Colonic mucosa (tissue), 4 donors: ENCODE measurements at regions of chr17 and their contacts with region 1.

Region 1: GRCh38 chr17:46995841-46996571 is 17.0 kb upstream of the RPRML start:
- DNase-seq: no peak
- H3K4me3 ChIP-seq: no peak overlapping the region
- H3K27ac ChIP-seq: no peak overlapping the region
- H3K4me1 ChIP-seq: no peaks in the 10 kb centered on the region
- H3K27me3 ChIP-seq: no peaks in the 10 kb centered on the region
- CTCF ChIP-seq: no peak

Region 2: DNA sequence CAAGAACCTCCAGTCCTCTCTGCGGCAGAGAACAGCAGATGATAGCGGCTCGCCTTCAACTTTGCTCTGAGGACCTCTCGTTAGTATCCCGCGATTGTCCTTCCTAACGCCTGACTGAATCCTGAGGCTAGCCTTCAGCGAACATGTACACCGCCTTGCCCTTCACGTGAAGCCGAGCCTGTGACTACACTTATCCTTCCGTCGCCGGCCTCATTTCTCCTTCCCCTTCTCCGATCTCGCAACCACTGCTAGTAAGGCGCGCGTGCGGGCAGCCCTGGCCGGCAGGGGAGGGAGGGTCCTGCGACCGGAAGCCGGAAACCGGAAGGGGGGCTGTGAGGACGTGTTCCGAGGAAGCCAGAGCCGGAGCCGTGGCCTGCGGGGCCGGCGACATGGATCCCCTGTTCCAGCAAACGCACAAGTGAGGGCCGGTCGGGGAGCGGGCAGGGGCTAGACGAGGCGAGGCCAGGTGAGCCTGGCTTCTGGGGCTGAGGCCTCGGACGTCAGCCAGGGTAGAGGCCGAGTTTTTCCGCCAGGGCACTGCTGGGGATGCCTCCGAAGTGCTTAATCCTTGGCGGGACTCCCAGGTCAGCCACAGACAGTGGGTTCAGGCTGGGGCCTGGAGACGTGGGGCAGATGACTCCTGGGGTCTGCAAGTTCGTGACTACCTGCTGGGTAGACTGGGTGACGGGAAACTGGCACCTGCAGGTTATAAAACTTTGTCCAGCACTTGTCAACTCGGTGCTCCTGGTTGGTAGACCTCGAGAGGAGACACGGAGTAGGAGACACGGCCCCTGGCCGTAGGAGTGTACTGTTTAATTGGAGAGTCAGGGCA is 73.0 kb before region 1 on chr17 and contains the start of gene GOSR2:
- intact Hi-C with region 1: no loop called
- DNase-seq: peak; percentile 90
- H3K4me3 ChIP-seq: peak within 1 kb of the TSS; percentile 98
- H3K27ac ChIP-seq: peak within 1 kb of the TSS; percentile 90
- H3K4me1 ChIP-seq: peaks cover 8% of the 10 kb centered on the region
- H3K27me3 ChIP-seq: no peaks in the 10 kb centered on the region
- CTCF ChIP-seq: no peak
- total RNA-seq, gene GOSR2: 36.5 to 39.4 TPM

Region 3: DNA sequence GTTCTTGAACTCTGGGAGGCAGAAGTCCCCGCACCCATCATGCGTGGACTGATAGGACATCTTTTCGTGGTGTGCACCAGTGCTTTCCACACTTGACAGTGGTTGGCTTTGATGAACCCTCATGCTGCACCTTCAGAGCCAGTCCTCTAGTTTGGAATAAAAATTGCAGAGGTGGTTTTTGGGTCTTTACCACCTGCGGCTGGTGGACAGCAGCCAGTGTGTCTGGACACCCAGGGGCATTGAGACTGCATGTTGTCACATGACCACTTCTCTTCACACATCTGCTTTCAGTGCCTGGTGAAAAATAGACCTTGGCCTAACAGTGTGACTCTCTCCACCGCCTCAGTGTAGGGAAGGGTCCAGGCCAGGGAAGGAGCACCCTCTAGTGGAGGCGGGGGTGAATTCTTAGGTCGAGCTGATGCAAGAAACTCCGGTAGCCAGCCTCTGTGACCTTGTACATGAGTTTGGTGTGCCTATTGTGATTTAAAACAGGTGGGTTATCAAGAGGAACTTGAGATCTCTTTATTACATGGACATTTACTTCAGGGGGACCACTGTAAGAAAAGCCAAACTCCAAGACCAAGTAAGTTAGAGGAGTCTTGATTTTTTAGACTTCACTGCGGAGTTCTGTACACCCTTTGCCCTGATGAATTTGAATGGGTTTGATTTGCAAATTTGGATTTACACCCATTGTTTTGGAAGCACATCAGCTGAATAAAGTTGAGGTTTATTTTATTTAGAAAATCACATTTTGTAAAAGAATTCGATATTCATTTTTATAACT is 55.2 kb before region 1 on chr17:
- intact Hi-C with region 1: loop called (anchors 2 kb)
- DNase-seq: peak; percentile 74
- H3K4me3 ChIP-seq: no peak overlapping the region
- H3K27ac ChIP-seq: no peak overlapping the region
- H3K4me1 ChIP-seq: no peaks in the 10 kb centered on the region
- H3K27me3 ChIP-seq: no peaks in the 10 kb centered on the region
- CTCF ChIP-seq: peak; percentile 80

Region 4: DNA sequence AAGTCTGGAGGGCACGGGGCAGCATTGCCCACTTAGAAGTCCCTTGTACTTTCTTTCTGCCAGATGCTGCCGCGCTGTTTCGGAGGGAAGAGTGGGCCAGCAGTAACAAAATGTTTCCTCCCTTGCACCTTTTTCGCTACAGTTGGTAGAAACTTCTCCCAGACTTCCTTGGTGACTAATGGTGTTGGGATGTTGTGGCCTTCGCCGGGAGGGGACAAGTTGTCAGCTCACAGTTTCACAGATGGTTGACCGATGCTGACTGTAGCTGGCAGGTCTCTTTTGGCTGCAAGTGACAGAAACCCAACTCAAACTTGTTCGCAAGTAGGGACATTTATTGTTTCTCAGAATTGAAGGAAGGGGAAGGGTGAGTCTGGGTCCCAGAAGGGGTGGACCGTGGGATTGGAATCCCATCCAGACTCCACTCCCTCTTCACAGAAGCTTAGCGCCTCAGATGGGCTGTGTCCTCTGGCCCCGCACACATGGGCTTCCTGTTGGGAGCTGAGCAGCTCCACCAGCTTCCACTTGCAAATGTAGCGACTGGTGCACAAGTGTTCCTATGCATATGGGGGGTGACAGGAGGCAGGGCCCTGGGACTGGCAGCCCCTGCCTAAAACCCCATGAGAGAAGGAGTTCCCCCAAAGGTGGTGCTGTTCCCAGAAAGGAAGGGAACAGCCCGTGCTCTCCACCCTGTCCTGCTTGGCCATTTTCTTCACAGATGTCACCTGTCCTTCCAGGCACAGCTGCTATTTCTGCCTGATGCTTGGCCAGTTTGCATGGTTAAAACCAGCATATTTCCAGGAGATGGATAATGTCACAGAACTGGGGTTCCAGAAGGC is 14.0 kb after region 1 on chr17:
- intact Hi-C with region 1: no loop called
- DNase-seq: no peak
- H3K4me3 ChIP-seq: no peak overlapping the region
- H3K27ac ChIP-seq: no peak overlapping the region
- H3K4me1 ChIP-seq: no peaks in the 10 kb centered on the region
- H3K27me3 ChIP-seq: no peaks in the 10 kb centered on the region
- CTCF ChIP-seq: no peak